WTC11 (cell line): ENCODE measurements at regions of chr3 and their contacts with region 1.

Region 1: GRCh38 chr3:184469423-184469822 is 89.6 kb downstream of the CHRD start:
- DNase-seq: peak; percentile 86
- ATAC-seq: peak; percentile 89
- H3K4me3 Mint-ChIP-seq: no peak overlapping the region
- H3K27ac Mint-ChIP-seq: no peak overlapping the region
- H3K4me1 Mint-ChIP-seq: peaks cover 11% of the 10 kb centered on the region; the same call in 1 of the 2 replicates
- H3K27me3 Mint-ChIP-seq: no peaks in the 10 kb centered on the region
- CTCF ChIP-seq: peak; percentile 59

Region 2: GRCh38 chr3:184448311-184449160 is 20.9 kb before region 1 on chr3:
- CTCF ChIA-PET with region 1: interaction called, 11 read pairs
- POLR2A ChIA-PET with region 1: no interaction called
- DNase-seq: no peak
- ATAC-seq: no peak
- H3K4me3 Mint-ChIP-seq: no peak overlapping the region
- H3K27ac Mint-ChIP-seq: no peak overlapping the region
- H3K4me1 Mint-ChIP-seq: no peaks in the 10 kb centered on the region
- H3K27me3 Mint-ChIP-seq: no peaks in the 10 kb centered on the region
- CTCF ChIP-seq: no peak

Region 3: GRCh38 chr3:184538600-184539431 is 69.4 kb after region 1 on chr3:
- CTCF ChIA-PET with region 1: interaction called, 57 read pairs
- POLR2A ChIA-PET with region 1: no interaction called
- DNase-seq: no peak
- ATAC-seq: no peak
- H3K4me3 Mint-ChIP-seq: no peak overlapping the region
- H3K27ac Mint-ChIP-seq: no peak overlapping the region
- H3K4me1 Mint-ChIP-seq: peaks cover 39% of the 10 kb centered on the region
- H3K27me3 Mint-ChIP-seq: peaks cover 3% of the 10 kb centered on the region
- CTCF ChIP-seq: no peak

Region 4: GRCh38 chr3:184836090-184836822 is 366.8 kb after region 1 on chr3:
- CTCF ChIA-PET with region 1: no interaction called
- POLR2A ChIA-PET with region 1: no interaction called
- DNase-seq: no peak
- ATAC-seq: no peak
- H3K4me3 Mint-ChIP-seq: no peak overlapping the region
- H3K27ac Mint-ChIP-seq: 0 out of 2 replicates have a peak overlapping the region, but pooled peaks have one; percentile 24
- H3K4me1 Mint-ChIP-seq: peaks cover 16% of the 10 kb centered on the region
- H3K27me3 Mint-ChIP-seq: no peaks in the 10 kb centered on the region
- CTCF ChIP-seq: no peak